ENCODE measurements at regions of chr1 and their contacts with region 1.

Region 1: GRCh38 chr1:152459596-152460528 is 45.8 kb upstream of the CRNN start:
- DNase-seq: peak; percentile 66

Region 2: GRCh38 chr1:152047730-152048402 is 412.0 kb before region 1 on chr1:
- CTCF ChIA-PET with region 1: interaction called, 14 read pairs
- POLR2A ChIA-PET with region 1: no interaction called
- DNase-seq: peak; percentile 85

Region 3: DNA sequence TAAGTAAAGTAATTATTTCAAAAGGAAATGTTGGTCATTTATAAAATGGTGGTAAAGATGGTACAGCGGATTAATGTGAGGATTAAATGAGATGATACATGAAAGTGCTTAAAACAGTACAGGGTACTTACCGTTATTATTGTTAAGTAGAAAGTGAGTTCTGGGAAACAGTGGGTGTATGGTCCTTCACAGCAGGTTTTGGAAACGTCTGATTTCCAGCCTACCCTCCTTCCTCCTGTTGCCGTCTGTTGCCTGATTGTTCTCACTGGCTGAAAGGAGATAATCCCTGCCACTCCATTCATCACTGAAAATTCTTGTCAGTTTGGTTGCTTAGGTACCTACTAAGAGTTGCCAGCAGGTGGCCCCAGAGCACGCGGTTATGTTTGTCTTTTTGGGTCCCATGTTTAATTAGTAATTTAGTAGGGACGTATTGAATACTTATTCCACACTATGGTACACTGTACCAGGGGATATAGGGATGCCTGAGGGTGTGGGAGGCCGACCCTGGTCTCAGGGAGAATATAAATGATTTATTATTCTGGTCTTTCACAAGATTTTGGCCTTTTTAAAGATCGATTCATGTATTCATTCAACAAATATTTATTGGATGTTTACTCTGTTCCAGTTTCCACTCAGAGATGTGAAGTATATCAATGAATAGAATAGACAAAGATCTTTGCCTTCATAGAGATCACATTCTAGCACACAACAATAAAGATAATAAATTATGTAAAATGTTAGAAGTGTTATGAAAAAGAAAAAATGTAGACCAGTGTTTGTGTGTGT is 270.0 kb before region 1 on chr1:
- CTCF ChIA-PET with region 1: interaction called, 64 read pairs
- POLR2A ChIA-PET with region 1: interaction called, 10 read pairs
- DNase-seq: peak; percentile 60

Region 4: DNA sequence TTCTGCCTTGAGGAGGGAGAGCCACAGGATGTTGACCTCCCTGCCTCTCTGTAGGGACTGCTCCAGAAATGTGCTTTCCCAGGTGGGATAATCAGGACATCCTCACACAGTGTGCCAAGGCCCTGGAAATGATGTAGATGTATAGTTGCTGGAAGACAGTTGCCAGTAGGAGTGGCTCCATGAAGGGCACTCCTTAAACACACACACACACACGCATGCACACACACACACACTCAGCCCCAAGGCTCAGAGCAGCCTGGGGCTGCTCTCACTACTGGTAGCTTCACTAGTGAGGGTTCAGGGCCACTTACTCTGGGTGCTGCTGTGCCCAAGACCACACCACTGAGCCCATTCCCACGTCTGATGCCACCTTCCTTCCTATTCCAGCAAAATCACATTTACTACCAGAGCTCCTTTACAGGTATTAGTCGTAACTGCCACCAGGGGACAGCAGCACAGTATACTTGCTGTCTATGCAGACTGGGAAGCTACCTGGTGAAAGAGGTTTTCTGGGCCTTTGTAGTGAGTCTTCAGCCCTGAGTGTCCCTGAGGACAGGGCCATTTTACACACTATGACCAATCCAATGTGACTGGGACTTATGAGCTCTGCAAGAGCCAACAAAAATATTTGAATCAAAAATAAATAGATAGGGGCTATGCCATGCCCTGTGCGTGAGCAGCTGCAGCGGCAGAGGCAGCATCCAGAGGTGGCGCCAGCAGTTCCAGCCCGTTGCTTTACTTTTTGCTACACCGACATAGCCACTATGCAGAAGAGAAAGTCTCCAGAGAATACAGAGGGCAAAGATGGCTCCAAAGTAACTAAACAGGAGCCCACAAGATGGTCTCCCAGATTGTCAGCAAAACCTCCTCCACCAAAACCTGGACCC is 60.8 kb before region 1 on chr1:
- CTCF ChIA-PET with region 1: interaction called, 18 read pairs
- POLR2A ChIA-PET with region 1: no interaction called
- DNase-seq: peak; percentile 26

Region 5: DNA sequence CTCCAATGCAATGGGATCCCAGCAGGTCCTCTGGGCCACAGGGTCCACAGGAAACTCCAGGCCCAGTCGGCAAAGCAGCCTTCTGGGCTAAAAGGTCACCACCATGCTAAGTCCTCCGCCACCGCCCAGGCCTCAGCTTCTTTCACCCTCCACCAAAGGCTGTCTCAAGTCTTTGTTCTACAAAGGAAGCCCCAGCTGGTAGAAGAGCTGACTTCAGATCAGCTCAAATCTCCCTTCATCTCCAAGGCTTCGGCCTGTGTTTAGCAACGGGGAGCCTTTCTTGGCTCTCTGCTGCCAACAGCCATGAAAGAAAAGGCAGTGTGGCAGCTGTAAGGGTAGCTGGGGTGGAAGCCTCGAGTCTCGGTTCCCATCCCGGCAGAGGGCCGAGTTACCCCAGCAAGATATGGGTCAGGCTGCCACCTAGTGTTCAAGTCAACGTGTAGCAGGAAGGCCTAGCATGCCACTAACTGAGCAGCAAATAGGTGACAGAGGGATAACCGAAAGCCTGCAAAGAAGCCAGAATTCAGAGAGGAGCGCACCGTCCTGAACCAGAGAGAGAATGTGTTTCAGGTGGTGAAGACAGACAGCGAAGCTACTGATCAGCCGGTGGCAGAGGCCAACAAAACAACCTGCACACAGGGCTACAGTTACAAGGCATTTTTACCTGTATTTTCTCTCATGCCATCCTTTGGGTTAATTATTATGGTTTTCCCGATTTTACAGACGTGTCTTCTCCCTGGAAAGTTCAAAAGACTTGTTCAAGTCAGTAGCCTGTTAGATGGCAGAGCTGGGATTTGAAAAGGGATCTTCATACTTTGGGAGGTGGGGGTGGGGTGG is 19.0 kb before region 1 on chr1:
- CTCF ChIA-PET with region 1: interaction called, 19 read pairs
- POLR2A ChIA-PET with region 1: no interaction called
- DNase-seq: peak; percentile 90

Region 6: GRCh38 chr1:152448095-152448494 is 11.8 kb before region 1 on chr1:
- CTCF ChIA-PET with region 1: interaction called, 19 read pairs
- POLR2A ChIA-PET with region 1: no interaction called
- DNase-seq: no peak

Region 7: DNA sequence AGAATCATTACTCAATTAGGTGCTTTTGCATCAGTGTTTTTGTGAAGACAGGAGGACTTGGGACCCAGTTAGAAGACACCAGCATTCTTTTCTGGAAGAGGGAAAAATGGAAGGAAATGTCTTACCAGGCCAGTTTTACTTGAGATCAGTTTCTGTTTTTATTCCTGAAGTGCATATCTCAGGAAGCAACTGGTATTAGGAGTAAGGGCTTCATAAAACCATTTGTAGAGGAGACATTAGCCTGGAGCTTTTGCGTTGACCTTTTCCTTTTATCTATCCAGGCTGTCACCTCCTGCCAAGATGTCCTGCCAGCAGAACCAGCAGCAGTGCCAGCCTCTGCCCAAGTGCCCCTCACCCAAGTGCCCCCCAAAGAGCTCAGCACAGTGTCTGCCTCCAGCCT is 153.6 kb after region 1 on chr1 and contains the start of gene LCE3B:
- CTCF ChIA-PET with region 1: no interaction called
- POLR2A ChIA-PET with region 1: no interaction called
- DNase-seq: no peak